IMR-90 (cell line): ENCODE measurements at regions of chr12 and their contacts with region 1.

Region 1: GRCh38 chr12:105992849-105993740 is 145.7 kb downstream of the NUAK1 start:
- DNase-seq: peak; percentile 81
- ATAC-seq: peak; percentile 81
- H3K4me3 ChIP-seq: no peak overlapping the region
- H3K27ac ChIP-seq: no peak overlapping the region; the same call in 1 of the 2 replicates
- H3K4me1 ChIP-seq: peaks cover 17% of the 10 kb centered on the region
- H3K27me3 ChIP-seq: no peaks in the 10 kb centered on the region
- CTCF ChIP-seq: no peak
- POLR2A ChIP-seq: no peak
- RAD21 ChIP-seq: peak; percentile 32; the same call in 1 of the 2 replicates

Region 2: DNA sequence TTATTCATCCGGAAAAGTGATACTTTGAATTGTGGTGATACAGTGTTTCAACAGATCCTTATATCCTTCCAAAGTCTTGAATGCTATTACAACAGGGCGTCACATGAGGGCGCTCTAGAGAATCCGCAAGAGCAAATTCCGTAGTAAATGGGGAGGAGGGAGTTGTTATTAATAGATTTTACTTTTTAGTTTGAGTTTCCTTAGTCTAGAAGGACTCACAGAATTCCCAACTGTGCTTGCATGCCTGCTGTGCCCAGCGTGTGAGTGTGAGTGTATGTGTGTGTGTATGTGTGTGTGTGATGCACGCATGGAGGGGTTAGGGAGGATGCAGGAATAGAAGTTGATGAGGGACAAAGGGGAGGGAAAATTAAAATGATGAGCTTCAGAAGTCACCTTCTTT is 287.3 kb before region 1 on chr12:
- CTCF ChIA-PET with region 1: no interaction called
- POLR2A ChIA-PET with region 1: no interaction called
- dilution Hi-C with region 1: no loop called
- in situ Hi-C with region 1: no loop called
- intact Hi-C with region 1: loop called (anchors 10 kb)
- DNase-seq: peak; percentile 67
- ATAC-seq: peak; percentile 85
- H3K4me3 ChIP-seq: no peak overlapping the region
- H3K27ac ChIP-seq: no peak overlapping the region
- H3K4me1 ChIP-seq: peaks cover 5% of the 10 kb centered on the region; the same call in 1 of the 2 replicates
- H3K27me3 ChIP-seq: peaks cover 6% of the 10 kb centered on the region
- CTCF ChIP-seq: peak; percentile 85
- POLR2A ChIP-seq: no peak
- RAD21 ChIP-seq: peak; percentile 79

Region 3: GRCh38 chr12:105977652-105978051 is 15.4 kb before region 1 on chr12:
- CTCF ChIA-PET with region 1: no interaction called
- POLR2A ChIA-PET with region 1: no interaction called
- dilution Hi-C with region 1: no loop called
- in situ Hi-C with region 1: no loop called
- intact Hi-C with region 1: no loop called
- DNase-seq: peak; percentile 91
- ATAC-seq: peak; percentile 96
- H3K4me3 ChIP-seq: no peak overlapping the region
- H3K27ac ChIP-seq: no peak overlapping the region
- H3K4me1 ChIP-seq: peaks cover 11% of the 10 kb centered on the region
- H3K27me3 ChIP-seq: no peaks in the 10 kb centered on the region
- CTCF ChIP-seq: no peak
- POLR2A ChIP-seq: no peak
- RAD21 ChIP-seq: peak; percentile 32

Region 4: GRCh38 chr12:106030210-106031175 is 37.4 kb after region 1 on chr12:
- CTCF ChIA-PET with region 1: no interaction called
- POLR2A ChIA-PET with region 1: no interaction called
- dilution Hi-C with region 1: no loop called
- in situ Hi-C with region 1: no loop called
- intact Hi-C with region 1: loop called (anchors 2 kb)
- DNase-seq: peak; percentile 96
- ATAC-seq: peak; percentile 86
- H3K4me3 ChIP-seq: peak overlapping the region; percentile 13; the same call in 1 of the 2 replicates
- H3K27ac ChIP-seq: peak overlapping the region; percentile 95
- H3K4me1 ChIP-seq: peaks cover 18% of the 10 kb centered on the region
- H3K27me3 ChIP-seq: no peaks in the 10 kb centered on the region
- CTCF ChIP-seq: no peak
- POLR2A ChIP-seq: peak; percentile 46; the same call in 1 of the 2 replicates
- RAD21 ChIP-seq: peak; percentile 10; the same call in 1 of the 2 replicates